PC-3 (cell line): ENCODE measurements at regions of chr5 and their contacts with region 1.

Region 1: DNA sequence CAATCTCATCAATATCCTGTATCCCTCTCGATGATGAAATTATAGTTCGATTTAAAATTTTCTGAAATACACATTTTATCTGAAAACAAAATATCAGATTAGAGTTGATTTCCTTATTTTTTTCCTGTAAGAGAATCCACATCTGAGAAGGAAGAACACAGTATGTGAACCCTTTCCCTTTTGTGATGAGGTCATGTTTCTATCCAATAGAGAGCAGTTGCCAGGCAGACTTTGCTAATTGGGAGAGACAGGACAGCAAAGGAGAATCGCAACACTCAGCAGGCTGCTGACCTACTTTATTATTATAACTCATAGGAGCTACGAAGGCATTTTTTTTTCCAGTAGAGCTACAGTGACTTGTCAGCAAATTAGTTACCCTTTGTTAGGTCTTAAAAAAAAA is 242.1 kb downstream of the HCN1 start:
- DNase-seq: peak; percentile 61
- ATAC-seq: peak; percentile 98
- H3K4me3 ChIP-seq: no peak overlapping the region
- H3K27ac ChIP-seq: no peak overlapping the region
- H3K4me1 ChIP-seq: no peaks in the 10 kb centered on the region
- H3K27me3 ChIP-seq: peaks cover 4% of the 10 kb centered on the region; the same call in 1 of the 2 replicates
- CTCF ChIP-seq: no peak

Region 2: DNA sequence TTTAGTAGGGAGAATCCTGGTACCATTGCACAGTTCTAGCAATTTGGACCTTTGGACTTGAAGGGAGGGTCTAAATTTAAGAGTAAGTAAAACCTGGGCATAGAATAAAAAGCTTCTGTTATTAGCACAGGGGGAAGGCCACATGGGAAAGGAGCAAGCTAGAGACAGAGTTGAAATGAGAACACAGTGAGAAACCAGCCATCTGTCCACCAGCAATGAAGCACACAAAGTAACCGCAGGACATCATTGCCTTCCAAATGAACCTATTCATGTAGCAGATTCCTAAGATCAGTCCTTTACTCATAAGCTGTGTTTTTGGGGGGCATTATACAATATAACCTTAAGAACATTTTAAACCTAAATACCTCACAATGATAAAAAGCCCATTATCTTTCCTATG is 165.3 kb before region 1 on chr5:
- CTCF ChIA-PET with region 1: no interaction called
- POLR2A ChIA-PET with region 1: no interaction called
- intact Hi-C with region 1: no loop called
- DNase-seq: no peak
- ATAC-seq: no peak
- H3K4me3 ChIP-seq: no peak overlapping the region
- H3K27ac ChIP-seq: no peak overlapping the region
- H3K4me1 ChIP-seq: no peaks in the 10 kb centered on the region
- H3K27me3 ChIP-seq: 0 out of 2 replicates have a peak, but pooled peaks cover 4% of the 10 kb centered on the region
- CTCF ChIP-seq: no peak

Region 3: GRCh38 chr5:45410304-45410995 is 43.6 kb before region 1 on chr5:
- CTCF ChIA-PET with region 1: no interaction called
- POLR2A ChIA-PET with region 1: interaction called, 12 read pairs
- intact Hi-C with region 1: no loop called
- DNase-seq: no peak
- ATAC-seq: no peak
- H3K4me3 ChIP-seq: no peak overlapping the region
- H3K27ac ChIP-seq: no peak overlapping the region
- H3K4me1 ChIP-seq: no peaks in the 10 kb centered on the region
- H3K27me3 ChIP-seq: no peaks in the 10 kb centered on the region
- CTCF ChIP-seq: no peak

Region 4: GRCh38 chr5:45440466-45440865 is 13.6 kb before region 1 on chr5:
- CTCF ChIA-PET with region 1: no interaction called
- POLR2A ChIA-PET with region 1: no interaction called
- intact Hi-C with region 1: no loop called
- DNase-seq: no peak
- ATAC-seq: no peak
- H3K4me3 ChIP-seq: no peak overlapping the region
- H3K27ac ChIP-seq: no peak overlapping the region
- H3K4me1 ChIP-seq: no peaks in the 10 kb centered on the region
- H3K27me3 ChIP-seq: 0 out of 2 replicates have a peak, but pooled peaks cover 4% of the 10 kb centered on the region
- CTCF ChIP-seq: no peak